Sciatic nerve (tissue), 2 donors: ENCODE measurements at regions of chr15 and their contacts with region 1.

Region 1: GRCh38 chr15:51969728-51970127 is 1.9 kb downstream of the LEO1 start:
- DNase-seq: no peak
- ATAC-seq: no peak

Region 2: DNA sequence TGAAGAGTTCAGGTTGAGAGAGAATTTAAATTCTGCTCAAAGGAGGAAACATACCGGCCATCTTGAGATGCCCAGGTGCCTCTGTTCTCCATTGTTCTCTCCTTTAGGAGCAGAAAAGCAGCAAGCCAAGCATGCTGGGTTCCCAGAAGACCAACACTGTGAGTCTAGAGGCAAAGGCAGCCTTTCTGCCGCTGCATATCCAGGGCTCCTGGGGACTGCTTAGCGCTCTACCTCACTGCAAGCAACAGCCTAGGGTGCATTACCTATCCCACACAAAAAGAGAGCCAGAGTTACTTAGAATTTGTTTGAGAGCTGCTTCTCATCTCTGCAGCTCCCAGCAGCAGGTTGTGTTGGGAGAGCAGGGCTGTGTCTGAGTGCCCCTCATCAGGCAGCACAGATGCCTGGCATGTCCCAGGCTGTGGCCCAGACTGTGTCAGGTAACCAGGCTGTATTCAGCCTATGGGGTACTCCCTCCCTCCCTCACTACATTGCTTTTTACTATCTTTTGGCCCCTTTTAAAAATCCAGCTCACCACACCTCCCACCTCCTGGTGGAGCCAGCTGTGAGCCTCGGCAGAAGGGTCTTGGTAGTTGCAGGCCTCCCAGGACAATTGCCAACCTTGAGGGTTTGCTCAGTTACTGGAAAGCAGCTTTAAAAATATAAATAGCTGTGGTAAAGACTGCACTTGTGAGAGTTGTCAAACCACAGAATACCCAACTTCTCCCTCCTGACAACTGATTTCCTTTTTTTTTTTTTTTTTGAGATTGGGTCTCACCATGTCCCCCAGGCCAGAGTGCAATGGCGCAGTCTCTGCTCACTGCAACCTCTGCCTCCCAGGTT is 112.7 kb after region 1 on chr15:
- intact Hi-C with region 1: loop called (anchors 10 kb)
- DNase-seq: no peak
- ATAC-seq: no peak

Region 3: DNA sequence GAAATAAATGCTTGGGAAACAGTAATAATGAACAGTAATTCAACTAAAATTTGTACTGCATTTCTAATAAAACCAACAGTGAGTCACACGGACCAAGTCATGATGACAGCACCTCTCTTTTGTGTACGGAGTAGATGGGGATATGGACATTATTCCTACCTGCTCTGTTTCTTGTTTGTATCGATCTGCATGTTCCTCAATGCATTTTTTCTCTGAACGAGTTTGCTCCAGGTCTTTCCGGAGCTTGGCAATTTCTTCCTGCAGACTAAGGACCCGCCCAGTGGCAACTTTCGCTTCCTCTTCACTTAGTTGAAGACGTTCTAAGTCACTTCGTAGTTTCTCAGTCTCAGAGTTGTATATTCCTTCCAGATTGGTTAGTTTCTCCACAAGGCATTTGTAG is 400.3 kb after region 1 on chr15:
- intact Hi-C with region 1: no loop called
- DNase-seq: no peak
- ATAC-seq: peak; percentile 13